ENCODE measurements at regions of chr7 and their contacts with region 1.

Region 1: GRCh38 chr7:130010689-130011412 is 40.3 kb downstream of the ZC3HC1 start:
- DNase-seq: peak; percentile 97
- H3K4me3 ChIP-seq: no peak overlapping the region
- H3K27ac ChIP-seq: peak overlapping the region; percentile 86
- H3K4me1 ChIP-seq: peaks cover 24% of the 10 kb centered on the region
- H3K27me3 ChIP-seq: no peaks in the 10 kb centered on the region
- CTCF ChIP-seq: peak; percentile 81 to 87
- POLR2A ChIP-seq: no peak

Region 2: DNA sequence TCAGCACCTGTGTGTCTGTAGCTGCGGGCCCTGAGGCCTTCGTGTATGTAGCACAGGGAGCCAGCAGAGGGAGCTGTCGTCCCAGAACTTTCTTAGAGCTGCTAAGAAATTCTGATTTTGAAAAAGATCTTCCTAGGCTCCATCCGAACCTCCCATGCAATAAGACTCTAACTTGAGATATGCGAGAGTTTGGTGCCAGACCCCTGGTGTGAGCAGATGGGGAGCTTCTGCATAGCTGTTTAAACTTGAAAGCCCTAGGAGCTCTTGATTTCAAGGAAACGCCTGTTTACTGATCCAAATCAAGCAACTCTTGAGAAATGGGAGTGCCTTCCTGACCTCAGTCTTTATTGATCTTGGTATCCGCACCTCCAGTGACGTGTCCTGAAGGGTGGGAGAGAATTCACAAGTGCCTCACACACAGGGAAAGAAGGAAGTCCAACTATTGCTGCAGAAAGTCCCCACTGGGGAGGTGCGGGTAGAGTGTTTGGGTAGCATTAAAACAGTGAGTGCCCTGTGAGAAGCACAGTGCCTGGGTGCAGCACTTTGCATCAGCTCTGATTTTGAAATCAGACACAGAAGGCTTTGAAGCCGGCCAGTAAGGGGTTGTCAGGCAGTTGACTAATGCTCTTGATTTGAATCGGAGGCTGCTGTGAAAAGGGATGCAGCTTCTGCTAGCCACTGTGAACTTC is 643.0 kb before region 1 on chr7:
- CTCF ChIA-PET with region 1: interaction called, 5 read pairs
- POLR2A ChIA-PET with region 1: no interaction called
- dilution Hi-C with region 1: no loop called
- intact Hi-C with region 1: loop called (anchors 1 kb)
- DNase-seq: peak; percentile 77
- H3K4me3 ChIP-seq: no peak overlapping the region
- H3K27ac ChIP-seq: no peak overlapping the region
- H3K4me1 ChIP-seq: peaks cover 4% of the 10 kb centered on the region
- H3K27me3 ChIP-seq: no peaks in the 10 kb centered on the region
- CTCF ChIP-seq: peak; percentile 85 to 89
- POLR2A ChIP-seq: no peak

Region 3: DNA sequence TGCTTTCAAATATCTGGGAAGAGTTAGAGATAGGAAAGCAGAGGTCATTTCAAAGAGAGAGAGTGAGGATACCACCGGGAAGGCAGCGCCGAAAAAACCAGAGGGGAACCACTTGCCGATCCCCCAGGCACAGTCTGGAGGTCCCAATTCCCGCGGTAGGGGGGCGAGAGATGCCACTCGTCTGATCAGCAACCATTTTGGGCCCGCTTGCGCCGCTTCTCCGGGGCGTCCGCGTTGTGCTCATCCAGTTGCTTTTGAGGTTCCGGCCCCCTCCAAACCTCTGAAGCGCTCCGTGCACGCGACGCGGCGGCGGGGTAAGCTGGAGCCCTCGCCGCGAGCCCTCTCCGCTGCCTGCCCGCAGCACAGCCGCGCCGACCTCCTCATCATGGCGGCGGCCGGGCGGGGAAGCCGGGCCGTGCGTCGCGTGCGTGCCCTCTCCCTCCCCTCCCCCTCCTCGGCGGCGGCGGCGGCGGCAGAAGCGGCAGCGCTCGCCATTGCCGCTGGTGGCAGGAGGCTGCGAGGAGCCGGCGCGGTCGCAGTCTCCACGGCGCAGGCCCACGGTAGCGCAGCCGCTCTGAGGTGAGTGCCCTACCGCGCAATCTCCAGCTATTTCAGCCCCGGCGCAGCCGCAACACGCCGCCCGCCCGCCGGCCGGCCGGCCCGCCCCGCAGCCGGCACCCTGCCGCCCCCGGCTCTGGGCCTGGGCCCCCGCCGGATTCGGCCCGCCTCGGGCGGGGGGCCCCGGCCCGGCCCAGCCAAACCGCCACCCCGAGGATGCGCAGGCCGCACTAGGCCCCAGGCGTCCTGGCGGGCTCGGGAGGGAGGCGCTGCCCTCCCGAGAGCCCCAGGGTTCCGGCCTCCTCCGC is 399.4 kb before region 1 on chr7 and contains the start of gene NRF1:
- CTCF ChIA-PET with region 1: interaction called, 5 read pairs
- POLR2A ChIA-PET with region 1: interaction called, 3 read pairs
- dilution Hi-C with region 1: no loop called
- intact Hi-C with region 1: loop called (anchors 1 kb)
- DNase-seq: peak; percentile 92
- H3K4me3 ChIP-seq: peak within 1 kb of the TSS; percentile 84 to 96 (median 95)
- H3K27ac ChIP-seq: peak within 1 kb of the TSS; percentile 81
- H3K4me1 ChIP-seq: peaks cover 13% of the 10 kb centered on the region
- H3K27me3 ChIP-seq: no peaks in the 10 kb centered on the region
- CTCF ChIP-seq: peak in 1 of 2 donors; percentile 10
- POLR2A ChIP-seq: peak; percentile 87
- total RNA-seq, gene NRF1: 17.4 and 20.3 TPM in 2 replicates

Region 4: GRCh38 chr7:129825496-129826267 is 185.2 kb before region 1 on chr7:
- CTCF ChIA-PET with region 1: interaction called, 130 read pairs
- POLR2A ChIA-PET with region 1: no interaction called
- dilution Hi-C with region 1: no loop called
- intact Hi-C with region 1: loop called (anchors 1 kb)
- DNase-seq: peak; percentile 73
- H3K4me3 ChIP-seq: peak overlapping the region; percentile 53 to 75 (median 71)
- H3K27ac ChIP-seq: peak overlapping the region; percentile 59
- H3K4me1 ChIP-seq: peaks cover 8% of the 10 kb centered on the region
- H3K27me3 ChIP-seq: no peaks in the 10 kb centered on the region
- CTCF ChIP-seq: peak in 1 of 2 donors; percentile 72
- POLR2A ChIP-seq: no peak

Region 5: GRCh38 chr7:129896568-129897382 is 114.1 kb before region 1 on chr7:
- CTCF ChIA-PET with region 1: interaction called, 6 read pairs
- POLR2A ChIA-PET with region 1: no interaction called
- dilution Hi-C with region 1: no loop called
- intact Hi-C with region 1: loop called (anchors 2 kb)
- DNase-seq: peak; percentile 59
- H3K4me3 ChIP-seq: no peak overlapping the region
- H3K27ac ChIP-seq: peak overlapping the region; percentile 55
- H3K4me1 ChIP-seq: peaks cover 16% of the 10 kb centered on the region
- H3K27me3 ChIP-seq: no peaks in the 10 kb centered on the region
- CTCF ChIP-seq: no peak
- POLR2A ChIP-seq: no peak

Region 6: GRCh38 chr7:129969807-129970446 is 40.9 kb before region 1 on chr7:
- CTCF ChIA-PET with region 1: interaction called, 21 read pairs
- POLR2A ChIA-PET with region 1: interaction called, 26 read pairs
- dilution Hi-C with region 1: no loop called
- intact Hi-C with region 1: loop called (anchors 1 kb)
- DNase-seq: peak; percentile 96
- H3K4me3 ChIP-seq: no peak overlapping the region
- H3K27ac ChIP-seq: peak overlapping the region; percentile 99
- H3K4me1 ChIP-seq: peaks cover 22% of the 10 kb centered on the region
- H3K27me3 ChIP-seq: no peaks in the 10 kb centered on the region
- CTCF ChIP-seq: no peak
- POLR2A ChIP-seq: no peak

Measured in endothelial cell of umbilical vein (primary cell).